ENCODE measurements at regions of chr1 and their contacts with region 1.

Region 1: DNA sequence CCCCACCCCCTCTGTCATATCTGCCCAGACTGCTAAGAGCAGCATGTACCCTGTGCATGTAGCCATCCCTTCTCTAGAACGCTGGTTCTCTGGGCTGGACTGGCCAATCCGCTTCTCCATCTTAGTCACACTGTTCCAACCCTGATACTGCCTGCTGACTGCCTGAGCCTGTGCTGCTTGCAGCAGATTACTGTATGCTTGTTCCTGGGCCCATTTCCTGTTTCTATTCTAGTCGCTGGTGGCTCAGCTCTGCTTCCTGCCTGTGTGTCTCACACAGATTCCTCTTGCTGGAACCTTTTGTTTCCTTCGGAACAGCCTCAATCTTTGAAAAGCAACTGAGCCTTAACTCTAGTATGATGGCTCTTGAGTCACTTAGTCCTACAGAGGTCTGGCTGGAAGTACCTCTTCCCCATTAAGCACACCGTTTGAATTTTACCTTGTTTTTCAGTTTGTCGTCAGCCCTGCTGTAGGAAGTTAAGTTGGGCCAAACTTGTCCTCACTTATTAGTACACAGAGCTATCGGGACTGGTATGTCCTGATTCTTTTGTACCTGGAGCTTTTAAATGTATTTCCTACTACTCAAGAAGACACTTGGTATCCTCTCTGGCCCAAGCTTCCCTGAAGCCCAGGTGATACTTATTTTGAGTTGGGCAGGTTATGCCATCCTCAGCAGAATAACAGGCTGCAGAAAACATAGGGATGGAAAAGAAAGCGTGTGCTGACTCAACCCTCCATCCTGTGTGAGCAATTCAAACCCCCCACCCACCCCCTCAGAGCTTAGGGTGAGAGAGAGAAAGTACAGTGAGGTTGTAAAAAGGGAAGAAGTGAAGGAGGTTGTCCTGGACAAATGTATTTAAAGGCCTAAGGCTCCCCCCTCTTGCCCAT is 43.4 kb upstream of the PIGV start:
- DNase-seq: peak; percentile 49 to 90 (median 73)
- ATAC-seq: peak; percentile 93 to 95 (median 94)
- H3K4me3 ChIP-seq: peak overlapping the region; percentile 13 to 21
- H3K4me3 Mint-ChIP-seq: peak overlapping the region; percentile 46 to 62 (median 52)
- H3K27ac ChIP-seq: peak overlapping the region; percentile 90
- H3K27ac Mint-ChIP-seq: peak overlapping the region; percentile 89 to 94
- H3K4me1 ChIP-seq: peaks cover 58 to 78% of the 10 kb centered on the region in 2 experiments
- H3K4me1 Mint-ChIP-seq: peaks cover 80 to 93% (median 89%) of the 10 kb centered on the region in 3 donors
- H3K27me3 ChIP-seq: no peaks in the 10 kb centered on the region
- H3K27me3 Mint-ChIP-seq: no peaks in the 10 kb centered on the region

Region 2: DNA sequence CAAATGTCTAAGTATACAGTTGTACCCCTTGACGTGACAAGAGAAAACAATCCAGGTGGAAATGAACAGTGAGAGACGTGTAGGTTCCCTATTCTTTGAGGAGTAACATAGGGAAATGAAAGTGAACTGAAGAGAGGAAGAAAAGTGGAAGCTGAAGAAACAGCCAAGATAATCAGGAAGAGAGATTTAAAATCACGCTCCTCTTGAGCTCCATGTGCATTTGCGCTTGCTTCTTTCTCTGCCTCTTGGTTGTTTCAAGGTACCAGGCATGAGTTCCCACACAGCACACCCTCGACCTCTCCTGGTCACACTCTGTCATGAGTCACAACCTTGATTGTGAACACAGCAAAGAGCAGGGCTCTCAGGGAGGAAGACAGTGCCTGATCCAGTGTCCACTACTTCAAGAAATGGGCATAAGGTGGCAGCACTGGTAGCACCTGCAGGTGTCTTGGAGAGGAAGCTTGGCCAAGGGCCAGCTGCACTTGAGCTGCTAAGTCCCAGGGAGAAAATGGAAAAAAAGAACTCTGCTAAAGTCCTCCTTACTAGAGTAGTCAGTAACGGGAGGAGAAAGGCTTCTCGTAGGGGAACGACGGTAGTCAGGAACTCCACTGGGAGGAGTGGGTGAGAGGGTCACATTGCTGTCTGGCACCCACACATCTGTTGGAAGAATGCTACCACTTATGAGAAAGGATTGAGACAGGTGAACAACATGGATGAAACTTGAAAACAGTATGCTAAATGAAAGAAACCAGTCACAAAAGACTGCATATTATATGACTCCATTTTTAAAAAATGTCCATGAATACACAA is 66.8 kb before region 1 on chr1:
- CTCF ChIA-PET with region 1: interaction called in 1 of 2 experiments, 10 read pairs
- POLR2A ChIA-PET with region 1: no interaction called
- DNase-seq: peak; percentile 17 to 79 (median 43)
- ATAC-seq: peak; percentile 88 to 99 (median 94)
- H3K4me3 ChIP-seq: no peak overlapping the region
- H3K4me3 Mint-ChIP-seq: peak overlapping the region; percentile 37 to 58 (median 58)
- H3K27ac ChIP-seq: peak overlapping the region; percentile 38
- H3K27ac Mint-ChIP-seq: peak overlapping the region; percentile 80 to 81
- H3K4me1 ChIP-seq: peaks cover 7 to 8% of the 10 kb centered on the region in 2 experiments
- H3K4me1 Mint-ChIP-seq: peaks cover 18 to 20% (median 19%) of the 10 kb centered on the region in 3 donors
- H3K27me3 ChIP-seq: no peaks in the 10 kb centered on the region
- H3K27me3 Mint-ChIP-seq: no peaks in the 10 kb centered on the region

Region 3: DNA sequence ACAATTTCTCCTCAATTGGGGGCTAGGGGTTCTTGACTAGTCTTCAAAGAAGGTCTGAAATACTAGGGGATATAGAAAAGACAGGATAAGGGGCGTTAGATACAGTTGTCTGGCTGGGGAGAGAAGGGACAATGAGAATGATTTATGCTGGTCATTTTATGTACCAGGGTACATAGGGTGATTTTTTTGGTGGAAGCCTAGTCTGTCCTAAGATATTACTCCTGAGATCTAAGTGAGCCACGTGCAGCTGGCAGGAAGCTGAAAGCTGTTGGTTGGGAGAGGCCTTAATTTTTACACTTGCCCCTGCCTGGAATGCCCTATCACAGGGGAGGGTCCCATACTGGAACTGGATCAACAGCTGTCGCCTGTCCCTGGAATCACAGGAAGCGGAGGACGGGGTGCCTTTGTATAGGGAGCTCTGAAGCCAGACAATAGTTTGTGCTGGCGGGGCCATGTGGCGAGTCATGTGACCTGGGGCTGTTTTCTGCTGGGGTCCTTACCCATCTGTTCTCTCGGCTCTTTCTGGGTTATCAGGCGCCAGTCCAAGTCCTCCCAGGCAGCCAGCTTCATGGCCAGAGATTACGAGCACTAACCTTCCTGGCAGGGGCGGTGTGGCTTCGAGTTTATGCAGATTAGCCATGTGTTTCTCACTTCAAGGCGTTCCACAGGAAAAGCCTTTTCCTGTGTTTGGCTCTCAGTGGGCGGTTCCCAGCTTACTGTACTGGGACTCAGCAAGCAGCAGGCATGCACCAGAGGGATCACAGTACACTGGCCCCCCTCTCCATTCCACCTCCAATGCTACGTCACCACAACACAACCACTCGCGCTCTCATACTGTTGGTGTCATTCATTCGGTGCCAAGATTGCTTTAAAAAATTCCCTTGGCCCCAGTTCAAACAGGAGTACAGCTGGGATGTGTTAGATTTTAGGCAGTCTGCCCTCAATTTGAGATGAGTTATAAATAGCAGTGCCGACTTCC is 21.0 kb before region 1 on chr1:
- CTCF ChIA-PET with region 1: interaction called, 5 to 11 read pairs
- POLR2A ChIA-PET with region 1: interaction called, 3 to 5 read pairs
- DNase-seq: peak in 34 of 35 experiments; percentile 2 to 71 (median 28)
- ATAC-seq: peak; percentile 64 to 85 (median 76)
- H3K4me3 ChIP-seq: peak overlapping the region; percentile 6 to 68
- H3K4me3 Mint-ChIP-seq: peak overlapping the region; percentile 8 to 75 (median 49)
- H3K27ac ChIP-seq: peak overlapping the region; percentile 0
- H3K27ac Mint-ChIP-seq: peak overlapping the region; percentile 85 to 88
- H3K4me1 ChIP-seq: peaks cover 65 to 69% of the 10 kb centered on the region in 2 experiments
- H3K4me1 Mint-ChIP-seq: peaks cover 89 to 95% (median 94%) of the 10 kb centered on the region in 3 donors
- H3K27me3 ChIP-seq: no peaks in the 10 kb centered on the region
- H3K27me3 Mint-ChIP-seq: no peaks in the 10 kb centered on the region